CD8-positive, alpha-beta T cell (primary cell): ENCODE measurements at regions of chr7 and their contacts with region 1.

Region 1: DNA sequence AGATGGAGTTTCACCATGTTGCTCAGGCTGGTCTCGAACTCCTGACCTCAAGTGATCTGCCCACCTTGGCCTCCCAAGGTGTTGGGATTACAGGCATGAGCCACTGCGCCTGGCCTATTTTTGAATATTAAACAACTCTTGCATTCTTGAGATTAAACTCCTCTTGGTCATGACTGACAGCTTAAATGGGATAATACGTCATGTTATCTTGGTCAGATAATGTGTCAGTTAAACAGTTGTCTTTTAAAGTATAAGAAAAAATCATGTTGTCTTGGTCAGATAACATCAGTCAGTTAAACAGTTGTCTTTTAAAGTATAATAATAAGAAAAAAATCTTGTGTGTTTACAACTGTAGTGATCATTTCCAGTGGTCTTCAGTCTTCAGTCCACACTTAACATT is 73.6 kb upstream of the SYPL1 start:
- DNase-seq: no peak
- ATAC-seq: no peak
- H3K4me3 ChIP-seq: no peak overlapping the region
- H3K4me3 Mint-ChIP-seq: no peak overlapping the region
- H3K27ac ChIP-seq: no peak overlapping the region
- H3K27ac Mint-ChIP-seq: no peak overlapping the region
- H3K4me1 ChIP-seq: no peaks in the 10 kb centered on the region
- H3K4me1 Mint-ChIP-seq: peaks cover 7% of the 10 kb centered on the region
- H3K27me3 ChIP-seq: no peaks in the 10 kb centered on the region
- H3K27me3 Mint-ChIP-seq: no peaks in the 10 kb centered on the region
- CTCF ChIP-seq: no peak

Region 2: GRCh38 chr7:105906695-105907094 is 279.0 kb before region 1 on chr7:
- CTCF ChIA-PET with region 1: no interaction called
- POLR2A ChIA-PET with region 1: no interaction called
- intact Hi-C with region 1: no loop called
- DNase-seq: no peak
- ATAC-seq: no peak
- H3K4me3 ChIP-seq: no peak overlapping the region
- H3K4me3 Mint-ChIP-seq: no peak overlapping the region
- H3K27ac ChIP-seq: no peak overlapping the region
- H3K27ac Mint-ChIP-seq: no peak overlapping the region
- H3K4me1 ChIP-seq: peaks cover 5% of the 10 kb centered on the region
- H3K4me1 Mint-ChIP-seq: peaks cover 9% of the 10 kb centered on the region
- H3K27me3 ChIP-seq: no peaks in the 10 kb centered on the region
- H3K27me3 Mint-ChIP-seq: no peaks in the 10 kb centered on the region
- CTCF ChIP-seq: no peak

Region 3: GRCh38 chr7:106166655-106167342 is 18.9 kb before region 1 on chr7:
- CTCF ChIA-PET with region 1: no interaction called
- POLR2A ChIA-PET with region 1: no interaction called
- intact Hi-C with region 1: no loop called
- DNase-seq: peak in 4 of 9 experiments; percentile 25 to 71 (median 48)
- ATAC-seq: peak; percentile 57
- H3K4me3 ChIP-seq: no peak overlapping the region
- H3K4me3 Mint-ChIP-seq: no peak overlapping the region
- H3K27ac ChIP-seq: no peak overlapping the region
- H3K27ac Mint-ChIP-seq: no peak overlapping the region
- H3K4me1 ChIP-seq: no peaks in the 10 kb centered on the region
- H3K4me1 Mint-ChIP-seq: no peaks in the 10 kb centered on the region
- H3K27me3 ChIP-seq: no peaks in the 10 kb centered on the region
- H3K27me3 Mint-ChIP-seq: peaks cover 3% of the 10 kb centered on the region
- CTCF ChIP-seq: peak; percentile 97

Region 4: GRCh38 chr7:106461993-106462859 is 276.5 kb after region 1 on chr7:
- CTCF ChIA-PET with region 1: interaction called, 194 read pairs
- POLR2A ChIA-PET with region 1: no interaction called
- intact Hi-C with region 1: no loop called
- DNase-seq: peak in 2 of 9 experiments; percentile 31 to 41
- ATAC-seq: no peak
- H3K4me3 ChIP-seq: no peak overlapping the region
- H3K4me3 Mint-ChIP-seq: no peak overlapping the region
- H3K27ac ChIP-seq: no peak overlapping the region
- H3K27ac Mint-ChIP-seq: no peak overlapping the region
- H3K4me1 ChIP-seq: no peaks in the 10 kb centered on the region
- H3K4me1 Mint-ChIP-seq: no peaks in the 10 kb centered on the region
- H3K27me3 ChIP-seq: no peaks in the 10 kb centered on the region
- H3K27me3 Mint-ChIP-seq: no peaks in the 10 kb centered on the region
- CTCF ChIP-seq: peak; percentile 57